CD8-positive, alpha-beta T cell (primary cell): ENCODE measurements at regions of chr5 and their contacts with region 1.

Region 1: GRCh38 chr5:133968049-133968980 is at the start of gene C5orf15:
- DNase-seq: peak; percentile 76 to 98 (median 91)
- ATAC-seq: peak; percentile 93
- H3K4me3 ChIP-seq: peak within 1 kb of the TSS; percentile 85 to 93
- H3K4me3 Mint-ChIP-seq: peak within 1 kb of the TSS; percentile 93
- H3K27ac ChIP-seq: peak within 1 kb of the TSS; percentile 79 to 94
- H3K27ac Mint-ChIP-seq: peak within 1 kb of the TSS; percentile 97
- H3K4me1 ChIP-seq: peaks cover 23% of the 10 kb centered on the region
- H3K4me1 Mint-ChIP-seq: peaks cover 49% of the 10 kb centered on the region
- H3K27me3 ChIP-seq: no peaks in the 10 kb centered on the region
- H3K27me3 Mint-ChIP-seq: no peaks in the 10 kb centered on the region
- CTCF ChIP-seq: no peak
- total RNA-seq, gene C5orf15: 12.4 to 13.0 TPM

Region 2: GRCh38 chr5:133980652-133981051 is 12.3 kb after region 1 on chr5:
- CTCF ChIA-PET with region 1: interaction called, 11 read pairs
- POLR2A ChIA-PET with region 1: no interaction called
- intact Hi-C with region 1: no loop called
- DNase-seq: no peak
- ATAC-seq: no peak
- H3K4me3 ChIP-seq: no peak overlapping the region
- H3K4me3 Mint-ChIP-seq: no peak overlapping the region
- H3K27ac ChIP-seq: no peak overlapping the region
- H3K27ac Mint-ChIP-seq: no peak overlapping the region
- H3K4me1 ChIP-seq: no peaks in the 10 kb centered on the region
- H3K4me1 Mint-ChIP-seq: peaks cover 9% of the 10 kb centered on the region
- H3K27me3 ChIP-seq: no peaks in the 10 kb centered on the region
- H3K27me3 Mint-ChIP-seq: no peaks in the 10 kb centered on the region
- CTCF ChIP-seq: no peak

Region 3: DNA sequence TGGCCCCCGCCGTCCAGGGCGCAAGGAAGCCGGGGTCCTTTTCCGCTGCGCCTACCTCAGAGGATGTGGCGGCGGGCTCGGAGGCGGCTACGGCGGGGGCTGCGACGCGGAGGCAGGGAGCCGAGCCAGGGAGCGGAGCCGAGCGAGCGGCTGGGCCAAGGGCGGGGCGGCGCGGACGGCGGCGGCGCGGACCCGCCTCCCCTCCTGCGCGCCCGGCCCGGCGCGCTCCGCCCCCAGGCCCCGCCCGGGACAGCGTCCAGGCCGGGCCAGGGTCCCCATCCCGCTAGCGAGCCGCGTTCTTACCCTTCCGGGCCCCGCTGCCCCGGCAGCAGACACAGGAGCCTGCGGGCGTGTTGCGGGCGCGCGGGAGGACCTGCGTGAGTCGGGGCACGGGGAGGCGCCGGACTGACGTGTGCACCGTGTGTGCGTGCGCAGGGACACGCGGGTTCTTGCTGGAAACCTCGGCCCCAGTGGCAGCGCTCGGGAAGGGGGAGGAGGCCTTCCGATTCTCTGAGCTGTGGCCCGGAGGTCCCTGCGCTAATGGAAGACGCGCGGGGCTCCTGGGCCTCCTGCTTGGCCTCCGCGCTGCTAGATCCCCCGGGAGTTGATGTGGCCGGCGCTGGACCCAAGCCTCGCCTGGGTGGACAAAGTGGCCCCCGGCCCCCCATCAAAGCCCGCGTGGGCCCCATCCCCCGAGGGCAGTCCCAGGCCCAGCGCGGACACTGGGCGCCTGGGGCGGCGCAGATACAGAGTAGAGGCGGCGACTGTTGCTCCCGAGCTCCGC is 36.5 kb after region 1 on chr5 and contains the start of gene VDAC1:
- CTCF ChIA-PET with region 1: interaction called, 3 read pairs
- POLR2A ChIA-PET with region 1: interaction called, 5 read pairs
- intact Hi-C with region 1: loop called (anchors 1 kb)
- DNase-seq: peak; percentile 68 to 96 (median 86)
- ATAC-seq: peak; percentile 80
- H3K4me3 ChIP-seq: peak within 1 kb of the TSS; percentile 68 to 81
- H3K4me3 Mint-ChIP-seq: peak within 1 kb of the TSS; percentile 95
- H3K27ac ChIP-seq: peak within 1 kb of the TSS; percentile 81 to 98
- H3K27ac Mint-ChIP-seq: peak within 1 kb of the TSS; percentile 97
- H3K4me1 ChIP-seq: peaks cover 30% of the 10 kb centered on the region
- H3K4me1 Mint-ChIP-seq: peaks cover 43% of the 10 kb centered on the region
- H3K27me3 ChIP-seq: no peaks in the 10 kb centered on the region
- H3K27me3 Mint-ChIP-seq: no peaks in the 10 kb centered on the region
- CTCF ChIP-seq: no peak
- total RNA-seq, gene VDAC1: 68.1 to 71.1 TPM

Region 4: DNA sequence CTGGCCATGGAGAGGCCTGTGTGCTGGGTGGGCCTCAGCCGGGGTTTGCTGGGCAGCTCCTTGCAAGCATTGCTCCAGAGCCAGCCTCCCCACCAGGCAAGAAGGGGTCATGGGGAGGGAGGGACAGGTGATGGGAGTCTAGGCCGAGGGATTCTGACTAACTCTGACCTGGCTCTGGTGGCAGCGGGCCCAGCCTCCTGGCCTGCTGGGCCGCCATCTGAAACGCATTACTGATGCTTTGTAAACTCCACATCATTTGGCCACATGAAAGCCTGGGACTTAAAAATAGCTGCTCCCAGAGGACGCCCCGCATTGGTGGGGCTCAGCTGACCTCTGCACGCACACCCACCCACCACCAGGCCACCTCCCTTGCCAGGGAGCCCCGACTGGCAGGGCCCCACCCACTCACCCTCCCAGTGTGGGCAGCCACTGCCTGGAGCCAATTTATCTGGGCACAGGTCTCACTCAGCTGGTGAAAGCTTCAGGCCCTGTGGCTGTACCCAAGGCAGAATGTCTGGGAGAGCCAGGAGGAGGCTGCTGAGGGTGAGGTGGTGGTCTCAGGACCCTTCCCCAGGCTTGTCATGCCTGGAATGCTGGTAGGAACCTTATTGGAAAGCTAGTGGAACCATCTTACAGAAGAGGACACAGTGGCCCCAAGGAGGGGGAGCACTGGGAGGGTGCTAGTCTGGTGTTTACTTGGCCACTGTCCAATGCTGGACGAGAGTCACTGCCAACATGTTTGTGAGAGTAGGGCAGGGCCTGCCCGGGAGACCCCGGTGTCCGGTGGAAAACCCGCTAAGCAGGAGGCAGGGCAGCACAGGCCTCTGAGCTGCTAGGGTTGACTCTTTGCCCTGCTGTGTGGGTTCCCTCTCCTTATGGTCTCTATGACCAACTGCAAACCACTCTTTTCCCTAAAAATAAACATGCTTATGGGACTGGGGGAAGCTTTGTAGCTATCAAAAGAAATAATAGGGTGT is 157.0 kb after region 1 on chr5:
- CTCF ChIA-PET with region 1: no interaction called
- POLR2A ChIA-PET with region 1: no interaction called
- intact Hi-C with region 1: no loop called
- DNase-seq: peak in 3 of 9 experiments; percentile 31 to 58 (median 38)
- ATAC-seq: no peak
- H3K4me3 ChIP-seq: peak overlapping the region; percentile 36 to 52
- H3K4me3 Mint-ChIP-seq: peak overlapping the region; percentile 95
- H3K27ac ChIP-seq: peak overlapping the region; percentile 64 to 83
- H3K27ac Mint-ChIP-seq: peak overlapping the region; percentile 96
- H3K4me1 ChIP-seq: peaks cover 96% of the 10 kb centered on the region
- H3K4me1 Mint-ChIP-seq: peaks cover 95% of the 10 kb centered on the region
- H3K27me3 ChIP-seq: no peaks in the 10 kb centered on the region
- H3K27me3 Mint-ChIP-seq: no peaks in the 10 kb centered on the region
- CTCF ChIP-seq: no peak

Region 5: GRCh38 chr5:134176511-134177368 is 208.4 kb after region 1 on chr5 and contains the start of gene SKP1:
- CTCF ChIA-PET with region 1: no interaction called
- POLR2A ChIA-PET with region 1: no interaction called
- intact Hi-C with region 1: loop called in 1 of 2 experiments (anchors 2 kb)
- DNase-seq: peak; percentile 79 to 93 (median 85)
- ATAC-seq: peak; percentile 88
- H3K4me3 ChIP-seq: peak within 1 kb of the TSS; percentile 98 to 99
- H3K4me3 Mint-ChIP-seq: peak within 1 kb of the TSS; percentile 98
- H3K27ac ChIP-seq: peak within 1 kb of the TSS; percentile 98
- H3K27ac Mint-ChIP-seq: peak within 1 kb of the TSS; percentile 99
- H3K4me1 ChIP-seq: peaks cover 31% of the 10 kb centered on the region
- H3K4me1 Mint-ChIP-seq: peaks cover 34% of the 10 kb centered on the region
- H3K27me3 ChIP-seq: no peaks in the 10 kb centered on the region
- H3K27me3 Mint-ChIP-seq: no peaks in the 10 kb centered on the region
- CTCF ChIP-seq: no peak
- total RNA-seq, gene SKP1: 290 to 301 TPM